ENCODE measurements at regions of chr22 and their contacts with region 1.

Region 1: GRCh38 chr22:40177738-40178416 is at the start of gene TNRC6B:
- DNase-seq: peak; percentile 59 to 94
- ATAC-seq: peak; percentile 97 to 98
- H3K4me3 ChIP-seq: peak within 1 kb of the TSS; percentile 88
- H3K27ac ChIP-seq: peak within 1 kb of the TSS; percentile 94 to 97
- H3K4me1 ChIP-seq: peaks cover 44% of the 10 kb centered on the region
- CTCF ChIP-seq: no peak
- EP300 ChIP-seq: no peak
- POLR2A ChIP-seq: peak; percentile 54
- RAD21 ChIP-seq: no peak
- polyA plus RNA-seq, gene TNRC6B: 4.9 and 5.2 TPM in 2 replicates

Region 2: DNA sequence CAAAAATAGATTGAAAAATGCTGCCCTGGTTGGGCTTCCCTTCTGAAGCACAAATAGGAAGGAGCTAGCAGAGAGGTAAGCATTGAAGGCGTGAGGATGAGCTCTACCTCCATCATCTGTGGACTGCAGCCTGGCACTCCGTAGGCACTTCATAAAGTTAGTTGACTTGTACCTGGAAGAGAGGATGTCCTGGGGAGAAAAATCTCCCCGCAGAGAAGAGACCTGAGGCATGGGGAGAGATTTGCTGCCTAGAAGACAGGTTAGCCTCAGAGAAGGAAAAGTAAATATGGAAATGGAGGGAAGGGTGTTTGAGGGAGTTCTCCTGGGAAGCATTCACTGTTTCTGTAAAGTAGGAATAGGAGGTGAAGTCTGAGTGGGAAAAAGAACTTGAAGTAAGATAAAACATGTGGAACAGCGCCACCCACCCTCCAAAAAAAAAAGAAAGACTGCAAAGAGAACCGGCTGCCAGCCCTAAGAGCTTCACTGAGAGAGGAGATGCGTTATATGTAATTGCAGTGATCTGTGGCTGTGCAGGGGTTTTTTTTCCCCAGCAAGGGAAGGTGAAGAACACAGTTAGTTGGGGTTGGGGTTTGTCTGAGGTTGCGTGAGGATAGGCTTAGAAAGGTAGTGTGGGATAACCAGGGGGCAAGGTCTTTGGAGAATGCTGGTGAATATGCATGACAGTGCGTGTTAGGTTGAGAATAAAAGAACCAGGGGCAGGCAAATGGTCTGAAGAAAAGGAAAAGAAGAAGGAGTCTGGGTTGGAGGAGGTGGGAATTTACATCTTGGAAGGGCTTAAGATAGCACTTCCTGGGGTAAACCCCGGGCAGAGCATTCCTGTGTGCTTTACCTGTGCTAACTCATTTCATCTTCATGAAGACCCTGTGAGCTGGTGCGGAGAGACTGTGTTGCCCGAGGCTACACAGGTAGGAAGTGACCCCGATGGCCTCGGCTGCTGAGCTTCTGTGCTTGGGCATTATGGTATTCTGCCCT is 15.8 kb after region 1 on chr22:
- CTCF ChIA-PET with region 1: interaction called, 12 read pairs
- POLR2A ChIA-PET with region 1: interaction called, 5 read pairs
- DNase-seq: peak; percentile 5 to 29
- ATAC-seq: peak; percentile 50 to 54; a peak in 3 of 6 replicates
- H3K4me3 ChIP-seq: no peak overlapping the region
- H3K27ac ChIP-seq: no peak overlapping the region
- H3K4me1 ChIP-seq: peaks cover 9% of the 10 kb centered on the region; the same call in 1 of the 3 replicates
- CTCF ChIP-seq: peak; percentile 25; the same call in 1 of the 3 replicates
- EP300 ChIP-seq: no peak
- POLR2A ChIP-seq: no peak
- RAD21 ChIP-seq: peak; percentile 34 to 53; a peak in 4 of 5 replicates

Region 3: DNA sequence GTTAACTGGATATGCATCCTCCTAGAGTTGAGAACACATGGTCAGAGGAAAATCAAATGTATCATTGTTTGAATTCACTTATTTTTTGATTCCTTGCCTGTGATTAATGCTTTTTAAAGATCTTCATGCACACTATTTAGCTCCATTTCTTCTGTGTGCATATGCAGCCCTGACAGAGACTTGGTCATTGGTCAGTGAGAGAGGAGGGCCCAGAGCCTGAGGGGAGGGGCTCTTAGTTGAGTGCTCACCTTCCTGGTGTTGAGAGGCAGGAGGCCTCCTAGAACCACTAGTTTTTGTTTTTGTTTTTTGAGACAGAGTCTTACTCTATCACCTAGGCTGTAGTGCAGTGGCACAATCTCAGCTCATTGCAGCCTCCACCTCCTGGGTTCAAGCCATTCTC is 48.7 kb after region 1 on chr22:
- CTCF ChIA-PET with region 1: no interaction called
- POLR2A ChIA-PET with region 1: interaction called, 11 read pairs
- DNase-seq: no peak
- ATAC-seq: no peak
- H3K4me3 ChIP-seq: no peak overlapping the region
- H3K27ac ChIP-seq: no peak overlapping the region
- H3K4me1 ChIP-seq: no peaks in the 10 kb centered on the region
- CTCF ChIP-seq: no peak
- EP300 ChIP-seq: no peak
- POLR2A ChIP-seq: no peak
- RAD21 ChIP-seq: no peak